ENCODE measurements at regions of chr12 and their contacts with region 1.

Region 1: GRCh38 chr12:106774005-106774807 is at the start of gene RIC8B:
- DNase-seq: peak; percentile 56 to 92 (median 74)
- ATAC-seq: peak; percentile 81
- H3K4me3 ChIP-seq: peak within 1 kb of the TSS; percentile 80 to 96
- H3K4me3 Mint-ChIP-seq: peak within 1 kb of the TSS; percentile 96
- H3K27ac ChIP-seq: peak within 1 kb of the TSS; percentile 78 to 96
- H3K27ac Mint-ChIP-seq: peak within 1 kb of the TSS; percentile 99
- H3K4me1 ChIP-seq: peaks cover 19% of the 10 kb centered on the region
- H3K4me1 Mint-ChIP-seq: peaks cover 40% of the 10 kb centered on the region
- H3K27me3 ChIP-seq: no peaks in the 10 kb centered on the region
- H3K27me3 Mint-ChIP-seq: no peaks in the 10 kb centered on the region
- CTCF ChIP-seq: no peak
- total RNA-seq, gene RIC8B: 5.6 to 6.4 TPM

Region 2: DNA sequence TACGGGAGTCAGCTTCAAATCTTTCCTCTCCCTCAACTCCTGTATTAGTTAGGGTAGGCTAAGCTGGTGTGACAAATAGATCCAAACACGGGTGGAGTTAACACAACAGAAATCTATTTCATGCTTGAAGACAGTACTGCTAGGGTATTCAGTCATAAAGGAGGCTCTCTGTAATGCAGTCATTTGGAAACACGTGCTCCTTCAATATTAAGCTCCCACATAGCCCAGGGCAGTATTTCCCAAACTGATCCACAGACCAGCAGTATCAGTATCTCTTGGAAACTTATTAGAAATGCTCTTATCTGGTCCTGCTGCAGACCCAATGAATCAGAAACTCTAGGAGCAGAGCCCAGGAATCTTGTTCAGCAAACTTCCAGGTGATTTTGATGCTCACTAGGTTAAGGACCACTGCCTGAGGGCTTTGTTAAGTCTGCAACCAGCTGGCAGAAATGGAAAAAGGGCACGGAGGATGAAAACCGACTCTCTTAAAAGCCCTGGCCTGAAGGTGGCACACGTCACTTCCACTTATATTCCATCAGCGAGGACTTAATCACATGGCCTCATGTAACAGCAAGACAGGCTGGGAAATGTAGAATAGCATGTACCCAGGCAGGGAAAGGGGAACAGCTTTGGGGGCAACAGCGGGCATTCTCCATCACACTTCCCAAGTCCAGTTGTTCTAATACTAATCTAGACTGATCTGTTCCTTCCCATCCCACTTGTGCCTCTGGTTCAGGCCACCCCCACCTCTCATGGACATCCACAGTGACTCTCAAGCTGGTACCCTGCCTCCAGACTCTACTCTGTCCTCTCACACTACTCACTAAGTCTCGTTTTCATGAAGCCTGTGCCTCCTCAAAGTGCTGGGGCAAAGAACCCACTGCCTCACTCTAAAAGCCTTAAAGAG is 37.9 kb before region 1 on chr12:
- CTCF ChIA-PET with region 1: no interaction called
- POLR2A ChIA-PET with region 1: no interaction called
- intact Hi-C with region 1: loop called in 1 of 2 experiments (anchors 5 kb)
- DNase-seq: peak in 3 of 9 experiments; percentile 13 to 63 (median 51)
- ATAC-seq: peak; percentile 61
- H3K4me3 ChIP-seq: no peak overlapping the region
- H3K4me3 Mint-ChIP-seq: no peak overlapping the region
- H3K27ac ChIP-seq: no peak overlapping the region
- H3K27ac Mint-ChIP-seq: no peak overlapping the region
- H3K4me1 ChIP-seq: no peaks in the 10 kb centered on the region
- H3K4me1 Mint-ChIP-seq: peaks cover 7% of the 10 kb centered on the region
- H3K27me3 ChIP-seq: no peaks in the 10 kb centered on the region
- H3K27me3 Mint-ChIP-seq: no peaks in the 10 kb centered on the region
- CTCF ChIP-seq: no peak

Region 3: DNA sequence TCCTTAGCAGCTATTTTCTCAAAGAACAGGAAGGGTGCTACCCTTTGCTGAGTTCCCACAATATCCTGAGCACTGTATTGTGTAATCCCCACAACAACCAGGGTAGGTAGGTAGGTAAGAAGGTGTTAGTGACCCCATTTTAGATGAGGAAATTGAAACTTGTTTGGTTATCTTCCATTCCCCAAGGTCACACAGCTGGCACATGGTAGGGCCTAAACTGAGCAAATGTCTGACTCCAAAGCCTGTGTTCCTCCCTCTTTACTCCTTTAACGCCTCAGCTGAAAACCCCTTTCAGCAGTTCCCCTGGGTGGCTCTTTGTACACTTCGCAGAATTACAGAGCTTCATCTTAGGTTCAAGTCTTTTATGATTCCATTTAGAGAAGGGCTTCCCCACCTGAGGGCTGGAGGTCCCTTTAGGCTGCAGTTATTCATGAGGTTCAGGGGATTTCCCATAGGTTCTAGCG is 26.2 kb before region 1 on chr12:
- CTCF ChIA-PET with region 1: interaction called, 5 read pairs
- POLR2A ChIA-PET with region 1: interaction called, 5 read pairs
- intact Hi-C with region 1: loop called in 1 of 2 experiments (anchors 1 kb)
- DNase-seq: peak in 5 of 9 experiments; percentile 26 to 87 (median 56)
- ATAC-seq: peak; percentile 91
- H3K4me3 ChIP-seq: no peak overlapping the region
- H3K4me3 Mint-ChIP-seq: peak overlapping the region; percentile 49
- H3K27ac ChIP-seq: peak overlapping the region; percentile 45 to 74
- H3K27ac Mint-ChIP-seq: peak overlapping the region; percentile 94
- H3K4me1 ChIP-seq: peaks cover 30% of the 10 kb centered on the region
- H3K4me1 Mint-ChIP-seq: peaks cover 37% of the 10 kb centered on the region
- H3K27me3 ChIP-seq: no peaks in the 10 kb centered on the region
- H3K27me3 Mint-ChIP-seq: no peaks in the 10 kb centered on the region
- CTCF ChIP-seq: no peak

Region 4: DNA sequence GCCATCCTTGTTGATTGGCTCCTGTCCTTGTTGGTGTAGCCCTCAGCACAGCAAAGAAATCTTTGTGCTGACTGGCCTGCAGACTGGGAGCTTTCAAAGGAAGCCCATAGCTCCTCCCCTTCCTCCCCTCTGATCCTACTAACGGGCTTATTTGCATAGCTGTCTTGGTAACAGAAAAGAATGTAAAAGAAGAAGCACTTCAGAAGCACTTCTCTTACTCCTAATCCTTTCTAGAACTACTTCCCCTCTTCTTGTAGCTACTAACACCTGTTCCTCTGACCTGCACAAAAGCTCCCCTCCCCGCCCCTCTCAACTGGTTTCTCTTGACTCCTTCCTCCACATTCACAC is 14.0 kb before region 1 on chr12:
- CTCF ChIA-PET with region 1: interaction called, 4 read pairs
- POLR2A ChIA-PET with region 1: interaction called, 3 read pairs
- intact Hi-C with region 1: loop called in 1 of 2 experiments (anchors 1 kb)
- DNase-seq: peak in 4 of 9 experiments; percentile 20 to 65 (median 36)
- ATAC-seq: peak; percentile 95
- H3K4me3 ChIP-seq: no peak overlapping the region
- H3K4me3 Mint-ChIP-seq: peak overlapping the region; percentile 75
- H3K27ac ChIP-seq: peak overlapping the region in 1 of 2 experiments; percentile 52
- H3K27ac Mint-ChIP-seq: peak overlapping the region; percentile 92
- H3K4me1 ChIP-seq: peaks cover 21% of the 10 kb centered on the region
- H3K4me1 Mint-ChIP-seq: peaks cover 29% of the 10 kb centered on the region
- H3K27me3 ChIP-seq: no peaks in the 10 kb centered on the region
- H3K27me3 Mint-ChIP-seq: no peaks in the 10 kb centered on the region
- CTCF ChIP-seq: no peak

Region 5: DNA sequence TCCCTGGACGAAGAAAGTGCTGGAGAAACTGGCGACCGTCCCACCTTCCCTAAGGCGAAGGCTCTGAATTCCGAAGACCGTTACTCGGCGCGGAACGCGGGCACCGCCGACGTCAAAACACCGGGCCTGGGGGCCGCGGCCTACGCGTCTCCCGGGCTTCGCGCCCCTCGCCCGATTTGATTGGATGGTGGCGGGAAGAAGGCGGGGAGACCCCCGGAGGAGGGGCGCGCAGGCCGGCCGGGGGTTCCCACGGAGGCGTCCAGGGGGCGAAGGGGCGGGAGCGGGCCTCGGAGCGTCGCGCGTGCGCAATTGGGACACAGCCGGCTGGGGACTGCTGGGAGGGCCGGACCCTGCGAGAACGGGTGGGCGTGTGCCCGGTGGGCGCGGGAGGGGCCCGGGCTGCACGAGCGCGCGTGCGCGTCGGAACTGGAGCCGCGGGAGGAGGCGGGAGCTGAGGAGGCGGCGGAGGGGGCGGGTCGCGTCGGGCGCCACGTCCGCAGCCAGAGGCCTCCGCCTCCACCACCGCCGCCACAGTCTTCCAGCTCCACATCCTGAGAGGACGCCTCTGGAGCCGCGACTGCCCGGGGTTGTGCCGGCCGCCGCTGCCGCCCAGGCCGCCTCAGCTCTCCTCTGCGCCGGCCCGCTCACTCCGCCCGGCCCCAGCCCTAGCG is 181.3 kb after region 1 on chr12 and contains the start of gene TMEM263:
- CTCF ChIA-PET with region 1: no interaction called
- POLR2A ChIA-PET with region 1: no interaction called
- intact Hi-C with region 1: loop called (anchors 1 to 10 kb)
- DNase-seq: peak; percentile 83 to 98 (median 93)
- ATAC-seq: peak; percentile 81
- H3K4me3 ChIP-seq: peak within 1 kb of the TSS; percentile 87 to 93
- H3K4me3 Mint-ChIP-seq: peak within 1 kb of the TSS; percentile 97
- H3K27ac ChIP-seq: peak within 1 kb of the TSS; percentile 76 to 90
- H3K27ac Mint-ChIP-seq: peak within 1 kb of the TSS; percentile 96
- H3K4me1 ChIP-seq: peaks cover 18% of the 10 kb centered on the region
- H3K4me1 Mint-ChIP-seq: peaks cover 41% of the 10 kb centered on the region
- H3K27me3 ChIP-seq: no peaks in the 10 kb centered on the region
- H3K27me3 Mint-ChIP-seq: no peaks in the 10 kb centered on the region
- CTCF ChIP-seq: no peak
- total RNA-seq, gene TMEM263: 34.3 to 35.3 TPM

Region 6: DNA sequence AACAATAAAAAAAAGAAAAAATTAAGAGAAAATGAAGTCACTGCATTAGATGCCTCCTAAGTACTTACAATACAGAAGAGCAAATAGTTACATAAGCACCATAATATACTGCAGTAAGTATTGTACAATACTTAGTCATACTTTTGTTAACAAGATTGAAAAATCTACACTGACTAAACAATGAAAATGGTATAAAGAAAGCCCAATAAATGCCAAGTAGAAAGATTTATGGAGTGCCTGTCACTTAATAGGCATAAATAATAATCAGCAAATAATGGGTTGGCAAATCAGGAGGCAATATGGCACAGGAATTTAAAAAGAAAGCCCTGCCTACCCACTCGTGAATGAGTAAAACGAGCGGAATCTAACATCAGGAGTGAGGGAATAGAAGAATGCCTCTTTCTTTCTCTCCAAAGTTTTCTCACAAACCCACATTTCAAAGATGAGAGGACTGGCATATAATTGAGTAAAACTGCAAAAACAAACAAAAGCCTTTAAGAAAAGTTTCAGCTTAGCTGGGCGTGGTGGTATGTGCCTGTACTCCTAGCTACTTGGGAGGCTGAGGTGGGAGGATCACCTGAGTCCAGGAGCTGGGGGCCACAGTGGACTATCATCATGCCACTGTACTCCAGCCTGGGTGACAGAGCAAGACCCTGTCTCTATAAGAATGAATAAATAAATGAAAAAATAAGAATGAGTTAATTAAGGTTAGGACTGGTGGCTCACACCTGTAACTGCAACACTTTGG is 283.0 kb after region 1 on chr12:
- CTCF ChIA-PET with region 1: no interaction called
- POLR2A ChIA-PET with region 1: no interaction called
- intact Hi-C with region 1: no loop called
- DNase-seq: no peak
- ATAC-seq: no peak
- H3K4me3 ChIP-seq: no peak overlapping the region
- H3K4me3 Mint-ChIP-seq: no peak overlapping the region
- H3K27ac ChIP-seq: no peak overlapping the region
- H3K27ac Mint-ChIP-seq: no peak overlapping the region
- H3K4me1 ChIP-seq: peaks cover 3% of the 10 kb centered on the region
- H3K4me1 Mint-ChIP-seq: peaks cover 11% of the 10 kb centered on the region
- H3K27me3 ChIP-seq: no peaks in the 10 kb centered on the region
- H3K27me3 Mint-ChIP-seq: no peaks in the 10 kb centered on the region
- CTCF ChIP-seq: no peak

Measured in CD8-positive, alpha-beta T cell (primary cell).